CD4-positive, alpha-beta T cell (primary cell): ENCODE measurements at regions of chr10 and their contacts with region 1.

Region 1: GRCh38 chr10:73798927-73799563 is 12.4 kb downstream of the NDST2 start:
- DNase-seq: no peak
- ATAC-seq: peak; percentile 14
- H3K4me3 ChIP-seq: no peak overlapping the region
- H3K4me3 Mint-ChIP-seq: no peak overlapping the region
- H3K27ac ChIP-seq: no peak overlapping the region
- H3K27ac Mint-ChIP-seq: peak overlapping the region; percentile 62
- H3K4me1 ChIP-seq: peaks cover 6% of the 10 kb centered on the region
- H3K4me1 Mint-ChIP-seq: no peaks in the 10 kb centered on the region
- H3K27me3 ChIP-seq: no peaks in the 10 kb centered on the region
- H3K27me3 Mint-ChIP-seq: no peaks in the 10 kb centered on the region
- CTCF ChIP-seq: no peak

Region 2: DNA sequence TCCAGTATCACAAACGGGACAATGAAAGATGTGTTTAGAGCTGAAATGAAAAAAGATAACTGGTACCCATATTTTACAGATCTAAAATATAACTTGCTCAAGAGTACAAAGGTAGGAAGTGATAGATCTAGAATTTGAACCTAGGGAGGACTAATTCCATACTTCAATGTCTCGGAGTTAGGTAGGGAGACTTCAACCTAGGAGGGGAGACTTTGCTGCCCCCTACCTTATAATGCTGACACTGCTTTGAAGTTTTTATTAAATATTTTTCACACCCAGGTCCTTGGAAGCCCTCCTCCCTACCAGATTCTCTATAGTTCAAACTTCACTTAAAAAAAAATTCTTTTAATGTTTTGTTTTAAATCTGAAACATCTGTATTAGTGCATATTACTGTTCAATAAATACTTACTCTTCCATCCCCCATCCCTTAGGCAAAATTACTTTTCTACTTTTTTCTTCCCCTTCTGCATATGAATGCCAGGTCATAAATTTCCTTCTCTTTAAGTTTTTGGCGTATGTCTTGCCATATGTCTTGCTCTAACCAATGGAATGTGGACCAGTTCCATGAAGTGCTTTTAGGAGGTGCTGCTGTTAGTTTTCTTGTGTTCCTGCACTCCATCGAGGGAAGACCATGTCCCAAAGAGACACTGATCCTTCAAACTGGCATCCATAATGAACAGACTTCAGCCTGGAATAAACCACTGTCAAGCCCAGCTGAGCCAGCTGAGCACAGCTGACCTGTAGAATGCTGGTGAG is 1231.0 kb before region 1 on chr10:
- CTCF ChIA-PET with region 1: no interaction called
- POLR2A ChIA-PET with region 1: no interaction called
- intact Hi-C with region 1: no loop called
- DNase-seq: no peak
- ATAC-seq: no peak
- H3K4me3 ChIP-seq: no peak overlapping the region
- H3K4me3 Mint-ChIP-seq: no peak overlapping the region
- H3K27ac ChIP-seq: no peak overlapping the region
- H3K27ac Mint-ChIP-seq: no peak overlapping the region
- H3K4me1 ChIP-seq: no peaks in the 10 kb centered on the region
- H3K4me1 Mint-ChIP-seq: peaks cover 6% of the 10 kb centered on the region
- H3K27me3 ChIP-seq: no peaks in the 10 kb centered on the region
- H3K27me3 Mint-ChIP-seq: no peaks in the 10 kb centered on the region
- CTCF ChIP-seq: no peak

Region 3: DNA sequence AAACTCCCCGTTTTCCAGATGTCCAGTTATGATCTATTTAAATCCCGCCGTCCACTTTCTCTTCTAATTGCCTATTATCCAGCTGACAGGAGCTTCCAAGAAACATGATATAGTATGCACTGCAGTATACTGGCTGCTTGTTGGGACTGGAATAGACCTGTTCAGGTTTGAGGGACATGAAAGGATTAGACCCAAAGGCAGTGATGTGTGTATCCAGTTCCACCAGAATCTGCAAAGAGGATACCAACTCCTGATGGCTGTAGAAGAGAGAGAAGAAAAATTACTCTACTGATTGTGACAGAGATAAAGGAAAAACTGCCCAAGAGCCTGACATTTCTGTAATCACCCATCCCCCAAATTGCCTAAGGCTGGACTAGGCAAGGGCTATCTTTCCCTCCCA is 374.5 kb before region 1 on chr10:
- CTCF ChIA-PET with region 1: no interaction called
- POLR2A ChIA-PET with region 1: no interaction called
- intact Hi-C with region 1: no loop called
- DNase-seq: no peak
- ATAC-seq: no peak
- H3K4me3 ChIP-seq: no peak overlapping the region
- H3K4me3 Mint-ChIP-seq: no peak overlapping the region
- H3K27ac ChIP-seq: no peak overlapping the region
- H3K27ac Mint-ChIP-seq: no peak overlapping the region
- H3K4me1 ChIP-seq: no peaks in the 10 kb centered on the region
- H3K4me1 Mint-ChIP-seq: no peaks in the 10 kb centered on the region
- H3K27me3 ChIP-seq: no peaks in the 10 kb centered on the region
- H3K27me3 Mint-ChIP-seq: no peaks in the 10 kb centered on the region
- CTCF ChIP-seq: no peak

Region 4: DNA sequence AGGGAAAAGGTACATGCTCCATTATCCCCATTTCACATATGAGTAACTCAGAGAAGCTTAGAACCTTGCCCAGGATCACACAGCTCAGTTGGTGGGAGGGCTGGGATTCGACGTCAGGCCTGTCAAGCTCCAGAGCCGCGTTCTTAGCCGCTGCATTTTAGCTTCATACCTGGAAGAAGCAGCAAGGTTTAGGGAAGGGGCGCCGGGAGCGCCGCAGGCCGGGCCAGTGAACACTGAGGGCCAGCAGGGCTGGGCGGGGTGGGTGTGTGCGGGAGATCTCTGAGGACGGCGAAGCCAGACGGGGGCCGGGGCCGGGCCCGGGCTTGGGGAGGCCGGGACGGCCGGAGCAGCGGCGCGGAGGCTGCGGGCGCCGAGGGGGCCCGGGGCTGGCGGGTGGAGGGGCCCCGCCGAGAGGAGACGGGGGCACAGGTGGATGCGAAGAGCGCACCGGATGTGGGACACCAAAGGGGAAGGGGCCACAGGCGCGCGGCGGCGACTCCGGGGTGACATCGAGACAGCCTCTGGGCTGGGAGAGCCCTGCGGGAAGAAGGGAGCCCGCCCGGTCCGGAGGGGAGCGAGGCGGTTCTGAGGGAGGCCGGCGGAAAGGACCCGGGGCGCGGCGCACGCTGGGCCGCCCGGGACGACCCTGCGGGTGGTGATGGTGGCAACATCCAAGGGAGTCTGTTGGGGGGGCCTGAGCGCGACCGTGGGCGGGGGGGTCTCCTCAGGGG is 11.9 kb after region 1 on chr10:
- CTCF ChIA-PET with region 1: no interaction called
- POLR2A ChIA-PET with region 1: interaction called, 20 read pairs
- intact Hi-C with region 1: no loop called
- DNase-seq: peak in 13 of 14 experiments; percentile 40 to 80 (median 65)
- ATAC-seq: peak; percentile 17
- H3K4me3 ChIP-seq: peak overlapping the region; percentile 70
- H3K4me3 Mint-ChIP-seq: peak overlapping the region; percentile 97
- H3K27ac ChIP-seq: peak overlapping the region; percentile 55 to 91
- H3K27ac Mint-ChIP-seq: peak overlapping the region; percentile 99
- H3K4me1 ChIP-seq: peaks cover 53% of the 10 kb centered on the region
- H3K4me1 Mint-ChIP-seq: peaks cover 52% of the 10 kb centered on the region
- H3K27me3 ChIP-seq: no peaks in the 10 kb centered on the region
- H3K27me3 Mint-ChIP-seq: no peaks in the 10 kb centered on the region
- CTCF ChIP-seq: no peak